HEK293T (cell line): ENCODE measurements at regions of chr15 and their contacts with region 1.

Region 1: DNA sequence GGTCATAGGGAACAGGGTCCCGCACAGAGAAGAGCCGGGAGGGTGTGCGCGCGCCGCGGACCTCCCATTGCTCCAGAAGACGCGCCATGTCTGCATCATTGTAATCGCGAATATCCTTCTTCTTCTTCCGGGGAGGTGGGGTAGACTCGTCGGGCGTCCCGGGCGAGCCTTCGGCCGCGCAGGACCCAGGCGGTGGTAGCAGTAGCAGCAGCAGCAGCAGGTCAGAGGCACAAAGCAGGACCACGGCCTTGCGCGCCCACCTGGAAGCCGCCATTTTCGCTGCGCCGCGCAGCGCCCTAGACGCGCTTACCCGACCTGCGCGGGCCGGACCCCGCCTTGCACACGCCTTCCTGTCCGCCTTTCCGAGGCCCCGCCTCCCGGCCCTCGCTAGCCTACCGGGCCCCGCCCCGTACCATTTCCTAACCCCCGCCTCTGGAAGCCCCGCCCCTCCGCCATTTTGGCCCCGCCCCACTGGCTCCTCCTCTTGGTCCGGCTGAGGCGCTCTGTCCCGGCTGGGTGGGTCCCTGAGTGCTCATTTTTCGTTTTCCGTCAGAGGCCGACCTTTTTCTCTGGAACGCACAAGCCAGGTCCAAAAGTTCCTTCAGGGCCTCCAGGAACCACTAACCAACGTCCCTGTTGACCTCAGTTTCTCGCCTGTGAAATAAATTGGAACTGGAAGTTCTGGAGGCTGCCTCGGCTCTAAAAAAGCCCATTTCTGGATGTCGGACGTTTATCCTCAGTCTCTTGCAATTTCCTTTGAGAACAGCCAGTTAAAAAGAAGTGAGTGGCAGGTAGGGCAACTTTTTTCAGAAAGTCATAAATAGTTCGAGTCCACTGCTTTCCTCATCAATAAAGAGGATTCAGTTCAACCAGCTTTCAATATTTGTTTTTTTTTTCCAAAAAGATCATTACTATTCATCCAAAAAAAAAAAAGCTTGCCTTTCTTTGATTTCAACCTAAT is at the start of gene MESD:
- DNase-seq: peak; percentile 100

Region 2: GRCh38 chr15:80512726-80513660 is 476.8 kb before region 1 on chr15:
- CTCF ChIA-PET with region 1: no interaction called
- POLR2A ChIA-PET with region 1: no interaction called
- DNase-seq: no peak

Region 3: GRCh38 chr15:81000624-81001151 is 10.9 kb after region 1 on chr15 and contains the start of gene TLNRD1:
- CTCF ChIA-PET with region 1: interaction called, 3 read pairs
- POLR2A ChIA-PET with region 1: interaction called, 34 read pairs
- DNase-seq: peak; percentile 88